H1 (cell line): ENCODE measurements at regions of chr7 and their contacts with region 1.

Region 1: GRCh38 chr7:142523821-142524460 is 225.3 kb upstream of the PRSS1 start:
- DNase-seq: no peak
- H3K4me3 ChIP-seq: no peak overlapping the region
- H3K27ac ChIP-seq: no peak overlapping the region
- H3K4me1 ChIP-seq: no peaks in the 10 kb centered on the region
- H3K27me3 ChIP-seq: 0 out of 7 replicates have a peak, but pooled peaks cover 0 to 2% (median 0%) of the 10 kb centered on the region in 4 experiments
- CTCF ChIP-seq: peak in 1 of 3 experiments; percentile 18; a peak in 1 of 4 replicates
- EP300 ChIP-seq: no peak
- POLR2A ChIP-seq: no peak
- RAD21 ChIP-seq: no peak

Region 2: GRCh38 chr7:142542942-142543341 is 19.0 kb after region 1 on chr7:
- CTCF ChIA-PET with region 1: interaction called, 75 read pairs
- POLR2A ChIA-PET with region 1: no interaction called
- DNase-seq: no peak
- H3K4me3 ChIP-seq: no peak overlapping the region
- H3K27ac ChIP-seq: no peak overlapping the region
- H3K4me1 ChIP-seq: no peaks in the 10 kb centered on the region
- H3K27me3 ChIP-seq: no peaks in the 10 kb centered on the region
- CTCF ChIP-seq: no peak
- EP300 ChIP-seq: no peak
- POLR2A ChIP-seq: no peak
- RAD21 ChIP-seq: no peak

Region 3: DNA sequence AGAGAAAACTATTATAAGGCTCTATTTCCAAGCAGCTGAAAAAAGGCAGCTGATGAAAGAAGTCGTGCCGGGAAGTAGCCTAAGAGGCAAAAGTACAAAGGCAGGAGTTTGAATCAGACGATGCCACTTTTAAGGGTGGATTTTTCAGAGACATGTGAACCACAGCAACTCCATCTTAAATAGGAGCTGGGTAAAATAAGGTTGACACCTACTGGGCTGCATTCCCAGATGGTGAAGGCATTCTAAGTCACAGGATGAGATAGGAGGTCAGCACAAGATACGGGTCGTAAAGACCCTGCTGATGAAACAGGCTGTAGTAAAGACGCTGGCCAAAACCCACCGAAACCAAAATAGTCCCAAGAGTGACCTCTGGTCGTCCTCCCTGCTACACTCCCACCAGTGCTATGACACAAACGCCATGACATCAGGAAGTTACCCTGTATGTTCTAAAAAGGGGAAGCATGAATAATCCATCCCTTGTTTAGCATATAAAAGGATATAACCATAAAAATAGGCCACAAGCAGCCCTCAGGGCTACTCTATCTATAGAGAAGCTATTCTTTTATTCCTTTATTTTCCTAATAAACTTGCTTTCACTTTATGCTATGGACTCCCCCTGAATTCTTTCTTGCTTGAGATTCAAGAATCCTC is 179.8 kb after region 1 on chr7:
- CTCF ChIA-PET with region 1: no interaction called
- POLR2A ChIA-PET with region 1: no interaction called
- DNase-seq: no peak
- H3K4me3 ChIP-seq: no peak overlapping the region
- H3K27ac ChIP-seq: no peak overlapping the region
- H3K4me1 ChIP-seq: peaks cover 0 to 10% (median 4%) of the 10 kb centered on the region in 4 experiments; a peak in 4 of 7 replicates
- H3K27me3 ChIP-seq: no peaks in the 10 kb centered on the region
- CTCF ChIP-seq: no peak
- EP300 ChIP-seq: no peak
- POLR2A ChIP-seq: no peak
- RAD21 ChIP-seq: no peak